Endothelial cell of umbilical vein (primary cell): ENCODE measurements at regions of chr16 and their contacts with region 1.

Region 1: DNA sequence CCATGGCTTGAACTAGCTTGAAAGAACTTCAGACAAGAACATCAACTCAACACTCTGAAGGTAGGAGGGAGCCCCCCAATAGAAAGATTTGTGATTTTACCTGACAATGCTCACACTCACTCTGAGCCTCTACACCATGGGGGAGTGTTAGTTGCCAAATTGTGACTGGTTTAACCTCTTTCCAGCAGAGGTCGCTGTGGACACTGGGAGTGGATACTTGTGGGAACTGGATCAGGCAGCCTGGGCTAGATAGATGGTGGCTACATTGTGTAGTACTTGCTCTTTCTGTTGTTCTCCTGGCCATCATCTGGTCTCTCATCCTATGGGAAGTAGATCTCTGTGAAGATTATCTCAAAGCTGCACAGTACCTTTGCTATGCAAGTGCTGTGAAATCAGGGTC is 2.9 kb downstream of the SMPD3 start:
- DNase-seq: peak; percentile 35
- H3K4me3 ChIP-seq: no peak overlapping the region
- H3K27ac ChIP-seq: no peak overlapping the region
- H3K4me1 ChIP-seq: no peaks in the 10 kb centered on the region
- H3K27me3 ChIP-seq: peaks cover 6 to 8% of the 10 kb centered on the region in 2 experiments
- CTCF ChIP-seq: peak; percentile 44 to 55
- POLR2A ChIP-seq: no peak

Region 2: DNA sequence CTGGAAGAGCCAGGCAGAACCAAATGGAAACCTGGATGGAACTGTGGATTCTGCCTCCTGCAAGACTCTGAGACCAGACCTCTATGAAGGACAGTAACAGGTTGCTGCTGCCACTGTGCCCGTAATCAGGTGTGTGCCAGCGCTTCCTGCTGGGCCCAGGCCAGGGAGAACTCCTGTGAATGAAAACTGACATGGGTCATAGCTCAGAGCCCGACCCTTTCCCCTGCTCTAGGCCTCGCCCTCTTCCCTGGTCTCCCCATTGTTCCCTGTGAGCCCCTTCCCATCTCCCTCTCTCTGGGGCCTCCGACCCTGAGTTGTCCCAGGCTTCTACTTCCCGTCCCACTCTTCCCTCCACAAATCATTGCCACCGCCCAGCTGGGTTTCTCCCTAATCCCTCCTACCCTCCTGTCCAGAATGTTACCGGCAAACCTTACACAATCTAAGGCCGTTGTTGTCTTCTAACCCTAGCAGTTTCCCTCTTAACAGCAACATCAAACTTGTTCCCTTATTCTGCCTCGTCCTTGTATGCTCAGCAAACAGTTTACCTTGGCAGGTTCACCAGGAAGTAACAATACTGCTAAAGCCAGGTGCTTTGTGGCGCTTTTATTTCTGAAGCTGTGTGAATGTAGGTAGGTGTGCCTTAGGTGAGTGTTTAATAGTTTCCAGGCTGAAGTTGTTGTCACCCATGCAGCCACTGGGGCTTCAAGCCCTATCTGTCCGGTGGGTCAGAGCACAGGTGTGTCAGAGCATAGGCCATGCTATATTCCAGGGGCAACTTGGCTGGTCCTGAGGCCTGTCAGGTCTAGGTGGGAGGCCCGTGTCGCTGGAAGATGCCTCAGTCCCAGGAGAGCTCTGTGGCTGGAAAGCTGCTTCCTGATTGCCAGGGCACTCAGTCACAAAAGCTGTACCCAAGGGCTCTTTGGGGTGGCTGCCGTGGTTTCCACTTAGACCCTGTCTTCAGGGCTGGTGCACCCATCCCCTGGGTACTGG is 29.1 kb before region 1 on chr16:
- CTCF ChIA-PET with region 1: no interaction called
- POLR2A ChIA-PET with region 1: no interaction called
- dilution Hi-C with region 1: no loop called
- intact Hi-C with region 1: no loop called
- DNase-seq: no peak
- H3K4me3 ChIP-seq: no peak overlapping the region
- H3K27ac ChIP-seq: no peak overlapping the region
- H3K4me1 ChIP-seq: no peaks in the 10 kb centered on the region
- H3K27me3 ChIP-seq: peaks cover 2 to 5% of the 10 kb centered on the region in 2 experiments
- CTCF ChIP-seq: no peak
- POLR2A ChIP-seq: no peak

Region 3: GRCh38 chr16:68512183-68512582 is 66.7 kb after region 1 on chr16:
- CTCF ChIA-PET with region 1: interaction called, 9 read pairs
- POLR2A ChIA-PET with region 1: no interaction called
- dilution Hi-C with region 1: no loop called
- intact Hi-C with region 1: loop called (anchors 1 kb)
- DNase-seq: no peak
- H3K4me3 ChIP-seq: no peak overlapping the region
- H3K27ac ChIP-seq: no peak overlapping the region
- H3K4me1 ChIP-seq: no peaks in the 10 kb centered on the region
- H3K27me3 ChIP-seq: no peaks in the 10 kb centered on the region
- CTCF ChIP-seq: no peak
- POLR2A ChIP-seq: no peak